CD4-positive, alpha-beta T cell (primary cell): ENCODE measurements at regions of chr4 and their contacts with region 1.

Region 1: DNA sequence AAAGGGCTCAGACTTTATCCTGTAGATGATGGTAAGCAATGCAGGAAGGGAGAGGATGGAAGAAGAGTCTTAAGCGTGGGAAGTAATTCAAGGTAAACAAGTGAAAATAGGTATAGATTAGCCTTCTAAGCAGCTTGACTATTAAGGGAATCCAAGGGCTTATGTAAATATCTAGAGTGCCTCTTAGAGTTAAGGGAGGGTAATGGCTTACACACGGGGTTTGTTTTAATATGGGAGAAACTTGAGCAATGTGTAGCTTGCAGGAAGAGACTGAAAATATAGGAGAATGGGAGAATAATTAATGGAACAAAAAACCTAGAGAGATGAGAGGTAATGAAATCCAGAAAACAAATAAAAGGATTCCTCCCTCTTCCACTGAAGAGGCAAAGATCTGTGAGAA is 12.8 kb upstream of the SAP30 start:
- DNase-seq: no peak
- ATAC-seq: no peak
- H3K4me3 ChIP-seq: no peak overlapping the region
- H3K4me3 Mint-ChIP-seq: no peak overlapping the region
- H3K27ac ChIP-seq: no peak overlapping the region
- H3K27ac Mint-ChIP-seq: no peak overlapping the region
- H3K4me1 ChIP-seq: no peaks in the 10 kb centered on the region
- H3K4me1 Mint-ChIP-seq: no peaks in the 10 kb centered on the region
- H3K27me3 ChIP-seq: no peaks in the 10 kb centered on the region
- H3K27me3 Mint-ChIP-seq: no peaks in the 10 kb centered on the region
- CTCF ChIP-seq: no peak

Region 2: GRCh38 chr4:173211838-173212237 is 146.1 kb before region 1 on chr4:
- CTCF ChIA-PET with region 1: no interaction called
- POLR2A ChIA-PET with region 1: no interaction called
- intact Hi-C with region 1: no loop called
- DNase-seq: no peak
- ATAC-seq: no peak
- H3K4me3 ChIP-seq: no peak overlapping the region
- H3K4me3 Mint-ChIP-seq: no peak overlapping the region
- H3K27ac ChIP-seq: no peak overlapping the region
- H3K27ac Mint-ChIP-seq: no peak overlapping the region
- H3K4me1 ChIP-seq: no peaks in the 10 kb centered on the region
- H3K4me1 Mint-ChIP-seq: peaks cover 30% of the 10 kb centered on the region
- H3K27me3 ChIP-seq: no peaks in the 10 kb centered on the region
- H3K27me3 Mint-ChIP-seq: no peaks in the 10 kb centered on the region
- CTCF ChIP-seq: no peak

Region 3: DNA sequence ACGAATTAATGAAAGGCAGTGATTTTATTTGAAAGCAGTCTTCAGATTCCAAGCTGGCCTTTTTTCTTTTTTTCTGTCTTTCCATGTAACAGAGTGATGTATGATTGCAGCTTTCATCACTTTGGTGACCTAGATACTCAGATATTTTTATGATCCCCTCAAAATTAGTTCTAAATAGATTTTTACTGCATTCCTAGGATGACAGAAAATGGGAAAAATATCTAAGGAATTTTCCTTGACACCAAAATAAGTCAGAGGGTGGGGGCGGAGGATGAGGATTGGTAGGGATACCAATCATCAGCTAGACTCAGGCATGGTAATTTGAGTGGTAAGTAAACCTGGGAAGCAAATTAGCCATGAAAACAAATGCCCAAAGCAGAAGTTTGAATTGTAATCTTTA is 11.9 kb before region 1 on chr4:
- CTCF ChIA-PET with region 1: interaction called, 3 read pairs
- POLR2A ChIA-PET with region 1: no interaction called
- intact Hi-C with region 1: loop called in 1 of 2 experiments (anchors 2 kb)
- DNase-seq: no peak
- ATAC-seq: no peak
- H3K4me3 ChIP-seq: no peak overlapping the region
- H3K4me3 Mint-ChIP-seq: no peak overlapping the region
- H3K27ac ChIP-seq: no peak overlapping the region
- H3K27ac Mint-ChIP-seq: no peak overlapping the region
- H3K4me1 ChIP-seq: no peaks in the 10 kb centered on the region
- H3K4me1 Mint-ChIP-seq: no peaks in the 10 kb centered on the region
- H3K27me3 ChIP-seq: no peaks in the 10 kb centered on the region
- H3K27me3 Mint-ChIP-seq: peaks cover 4% of the 10 kb centered on the region
- CTCF ChIP-seq: no peak

Region 4: GRCh38 chr4:173698557-173699262 is 340.8 kb after region 1 on chr4:
- CTCF ChIA-PET with region 1: no interaction called
- POLR2A ChIA-PET with region 1: no interaction called
- intact Hi-C with region 1: no loop called
- DNase-seq: no peak
- ATAC-seq: no peak
- H3K4me3 ChIP-seq: no peak overlapping the region
- H3K4me3 Mint-ChIP-seq: no peak overlapping the region
- H3K27ac ChIP-seq: no peak overlapping the region
- H3K27ac Mint-ChIP-seq: no peak overlapping the region
- H3K4me1 ChIP-seq: no peaks in the 10 kb centered on the region
- H3K4me1 Mint-ChIP-seq: no peaks in the 10 kb centered on the region
- H3K27me3 ChIP-seq: no peaks in the 10 kb centered on the region
- H3K27me3 Mint-ChIP-seq: no peaks in the 10 kb centered on the region
- CTCF ChIP-seq: no peak